Right ventricle myocardium superior (tissue), 1 donor: ENCODE measurements at regions of chr12 and their contacts with region 1.

Region 1: GRCh38 chr12:45354399-45354798 is 138.5 kb downstream of the ANO6 start:
- DNase-seq: no peak
- ATAC-seq: no peak

Region 2: GRCh38 chr12:45215419-45216229 is 138.8 kb before region 1 on chr12 and contains the start of gene ANO6:
- intact Hi-C with region 1: loop called (anchors 10 kb)
- DNase-seq: peak; percentile 94
- ATAC-seq: peak; percentile 96
- total RNA-seq, gene ANO6: 46.6 TPM

Region 3: GRCh38 chr12:45660330-45660729 is 305.9 kb after region 1 on chr12:
- intact Hi-C with region 1: no loop called
- DNase-seq: no peak
- ATAC-seq: peak; percentile 25